Upper lobe of right lung (tissue), 1 donor: ENCODE measurements at regions of chr20 and their contacts with region 1.

Region 1: DNA sequence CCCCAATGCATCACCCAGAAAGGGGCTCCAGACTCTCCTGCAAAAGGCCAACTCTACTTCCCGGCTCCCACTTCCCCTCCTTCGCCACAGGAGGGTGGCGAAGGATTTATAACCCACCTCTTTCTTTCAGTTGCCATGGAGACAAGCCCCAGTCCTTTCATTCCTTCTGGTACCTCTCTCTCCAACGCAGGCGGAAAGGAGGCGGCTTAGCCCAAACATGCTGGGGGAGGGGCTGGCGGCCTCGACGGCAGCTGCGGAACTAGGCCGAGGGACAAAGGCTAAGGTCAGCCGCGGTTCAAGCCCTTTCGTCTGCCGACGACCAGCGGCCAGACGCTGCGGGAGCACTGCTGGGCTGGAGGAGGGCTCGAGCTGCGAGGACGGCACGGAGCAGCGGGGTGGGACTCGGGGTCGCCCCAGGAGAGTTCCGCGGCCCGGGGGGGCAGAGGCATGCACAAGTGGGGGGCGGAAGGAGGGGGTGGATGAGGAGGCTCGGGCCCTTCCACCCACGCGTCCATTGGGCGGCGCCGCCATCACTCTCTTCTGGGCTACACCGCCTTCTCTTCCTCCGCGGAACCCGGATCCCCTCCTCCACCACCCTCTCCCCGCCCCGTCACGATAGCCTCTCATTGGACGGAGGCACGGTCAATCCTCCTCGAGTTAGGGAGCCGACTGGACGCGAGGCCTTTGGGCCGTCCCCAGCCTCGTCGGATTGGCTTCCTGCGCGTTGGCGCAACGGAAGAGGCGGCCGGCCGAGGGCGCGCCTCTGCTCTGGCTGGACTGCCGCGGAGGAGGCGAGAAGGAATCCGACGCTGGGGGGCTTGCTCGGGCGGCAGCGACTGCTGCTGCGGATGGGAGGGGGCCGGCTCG is at the start of gene PANK2:
- DNase-seq: peak; percentile 99
- ATAC-seq: peak; percentile 98
- H3K4me3 ChIP-seq: peak within 1 kb of the TSS; percentile 84
- H3K27ac ChIP-seq: peak within 1 kb of the TSS; percentile 96
- H3K4me1 ChIP-seq: peaks cover 39% of the 10 kb centered on the region
- H3K27me3 ChIP-seq: no peaks in the 10 kb centered on the region
- CTCF ChIP-seq: peak; percentile 46
- total RNA-seq, gene PANK2: 37.6 TPM

Region 2: DNA sequence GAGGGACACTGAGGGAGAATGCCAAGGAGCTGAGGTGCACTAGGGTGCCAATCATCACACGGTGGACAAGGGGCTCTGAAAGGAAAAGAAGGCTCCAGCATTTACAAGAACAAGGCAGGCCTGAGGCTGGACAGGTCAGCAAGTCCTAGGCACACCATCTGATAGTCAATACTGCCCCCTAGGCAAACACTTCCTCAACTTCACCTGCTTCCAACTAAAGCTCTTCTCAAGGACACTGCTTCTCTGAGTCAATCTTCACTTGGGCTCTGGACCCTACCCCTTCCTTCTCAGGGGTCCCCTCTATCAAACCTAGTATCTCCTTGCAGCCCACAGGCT is 612.2 kb before region 1 on chr20:
- intact Hi-C with region 1: no loop called
- DNase-seq: no peak
- ATAC-seq: peak; percentile 40
- H3K4me3 ChIP-seq: no peak overlapping the region
- H3K27ac ChIP-seq: no peak overlapping the region
- H3K4me1 ChIP-seq: no peaks in the 10 kb centered on the region
- H3K27me3 ChIP-seq: no peaks in the 10 kb centered on the region
- CTCF ChIP-seq: no peak

Region 3: GRCh38 chr20:4076671-4077070 is 187.8 kb after region 1 on chr20:
- intact Hi-C with region 1: loop called (anchors 10 kb)
- DNase-seq: no peak
- ATAC-seq: no peak
- H3K4me3 ChIP-seq: no peak overlapping the region
- H3K27ac ChIP-seq: no peak overlapping the region
- H3K4me1 ChIP-seq: peaks cover 1% of the 10 kb centered on the region
- H3K27me3 ChIP-seq: no peaks in the 10 kb centered on the region
- CTCF ChIP-seq: no peak